Mammary epithelial cell (primary cell): ENCODE measurements at regions of chr12 and their contacts with region 1.

Region 1: DNA sequence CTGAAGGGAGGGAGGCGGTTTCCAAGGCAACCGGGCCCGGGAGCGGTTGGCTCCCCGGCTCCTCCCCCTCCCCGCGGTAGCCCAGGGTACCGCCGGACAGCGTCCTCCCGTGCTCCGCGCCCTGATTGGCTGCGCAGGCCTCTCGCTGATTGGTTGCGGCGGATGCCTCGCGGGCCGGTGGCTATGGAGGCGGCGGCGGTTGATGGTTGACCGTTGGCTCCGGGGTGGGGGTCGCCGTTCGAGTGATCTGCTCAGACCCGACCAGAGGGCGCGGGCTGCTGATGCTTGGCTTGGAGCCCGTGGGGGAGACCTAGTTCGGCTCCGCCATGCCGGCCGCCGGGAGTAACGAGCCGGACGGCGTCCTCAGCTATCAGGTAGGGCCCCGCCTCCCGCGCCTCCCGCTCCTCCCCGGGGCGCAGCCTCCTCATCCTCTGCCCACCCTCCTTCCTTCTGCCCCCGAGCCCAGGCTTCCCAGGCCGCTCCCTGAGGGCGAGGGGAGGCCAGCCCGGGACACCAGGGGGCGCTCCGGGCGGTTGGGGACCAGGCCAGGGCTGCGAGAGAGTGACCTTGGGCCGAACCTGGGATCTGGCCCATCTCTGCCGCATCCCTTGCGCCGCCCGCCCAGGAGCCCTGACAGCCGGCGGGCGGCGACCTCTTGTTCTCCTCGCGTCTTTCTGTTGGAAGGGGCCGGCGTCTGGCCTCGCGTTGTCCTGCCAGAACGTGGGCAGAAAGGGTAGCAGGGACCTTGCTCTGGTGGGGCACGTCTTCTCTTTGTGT is at the start of gene SLC4A8:
- DNase-seq: peak; percentile 52
- H3K4me3 ChIP-seq: peak within 1 kb of the TSS; percentile 47 to 56 (median 54)
- H3K27ac ChIP-seq: no peak within 1 kb of the TSS
- H3K4me1 ChIP-seq: peaks cover 5% of the 10 kb centered on the region
- H3K27me3 ChIP-seq: no peaks in the 10 kb centered on the region
- CTCF ChIP-seq: peak; percentile 55 to 82
- total RNA-seq, gene SLC4A8: 0.07 to 0.50 TPM

Region 2: DNA sequence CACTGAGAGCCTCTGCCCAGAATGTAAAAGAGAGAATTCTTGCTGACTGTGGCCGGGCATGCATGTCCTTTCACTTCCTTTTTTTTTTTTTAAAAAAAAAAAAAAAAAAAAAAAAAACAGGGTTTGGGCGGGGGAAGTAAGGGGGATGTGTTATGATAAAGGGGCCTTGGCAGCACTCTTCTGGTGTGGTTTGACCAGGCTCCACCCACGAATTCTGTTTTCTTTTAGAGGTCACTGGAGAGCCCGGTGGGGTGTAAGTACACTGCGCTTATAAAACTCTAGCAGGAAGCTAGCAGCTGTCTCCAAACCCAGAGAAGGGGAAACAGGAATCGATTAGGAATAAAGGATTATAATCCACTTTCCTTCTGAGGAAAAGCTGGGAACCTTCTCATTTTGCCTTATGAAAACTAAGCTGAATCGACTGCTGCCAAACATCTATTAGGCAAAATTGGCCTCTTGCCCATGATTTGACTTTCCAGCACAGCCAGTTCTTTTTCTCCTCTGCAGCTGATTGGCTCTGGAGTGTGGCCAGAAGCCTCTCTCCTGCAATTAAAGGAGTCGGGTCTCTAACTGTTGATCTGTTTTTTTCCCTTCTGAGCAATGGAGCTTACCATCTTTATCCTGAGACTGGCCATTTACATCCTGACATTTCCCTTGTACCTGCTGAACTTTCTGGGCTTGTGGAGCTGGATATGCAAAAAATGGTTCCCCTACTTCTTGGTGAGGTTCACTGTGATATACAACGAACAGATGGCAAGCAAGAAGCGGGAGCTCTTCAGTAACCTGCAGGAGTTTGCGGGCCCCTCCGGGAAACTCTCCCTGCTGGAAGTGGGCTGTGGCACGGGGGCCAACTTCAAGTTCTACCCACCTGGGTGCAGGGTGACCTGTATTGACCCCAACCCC is 500.2 kb before region 1 on chr12:
- CTCF ChIA-PET with region 1: no interaction called
- dilution Hi-C with region 1: no loop called
- in situ Hi-C with region 1: no loop called
- intact Hi-C with region 1: no loop called
- DNase-seq: peak; percentile 80
- H3K4me3 ChIP-seq: peak overlapping the region; percentile 39 to 63 (median 61)
- H3K27ac ChIP-seq: no peak overlapping the region
- H3K4me1 ChIP-seq: peaks cover 32% of the 10 kb centered on the region
- H3K27me3 ChIP-seq: no peaks in the 10 kb centered on the region
- CTCF ChIP-seq: no peak

Region 3: GRCh38 chr12:50953045-50953444 is 471.8 kb before region 1 on chr12:
- CTCF ChIA-PET with region 1: no interaction called
- dilution Hi-C with region 1: no loop called
- in situ Hi-C with region 1: no loop called
- intact Hi-C with region 1: no loop called
- DNase-seq: no peak
- H3K4me3 ChIP-seq: no peak overlapping the region
- H3K27ac ChIP-seq: no peak overlapping the region
- H3K4me1 ChIP-seq: no peaks in the 10 kb centered on the region
- H3K27me3 ChIP-seq: no peaks in the 10 kb centered on the region
- CTCF ChIP-seq: no peak

Region 4: DNA sequence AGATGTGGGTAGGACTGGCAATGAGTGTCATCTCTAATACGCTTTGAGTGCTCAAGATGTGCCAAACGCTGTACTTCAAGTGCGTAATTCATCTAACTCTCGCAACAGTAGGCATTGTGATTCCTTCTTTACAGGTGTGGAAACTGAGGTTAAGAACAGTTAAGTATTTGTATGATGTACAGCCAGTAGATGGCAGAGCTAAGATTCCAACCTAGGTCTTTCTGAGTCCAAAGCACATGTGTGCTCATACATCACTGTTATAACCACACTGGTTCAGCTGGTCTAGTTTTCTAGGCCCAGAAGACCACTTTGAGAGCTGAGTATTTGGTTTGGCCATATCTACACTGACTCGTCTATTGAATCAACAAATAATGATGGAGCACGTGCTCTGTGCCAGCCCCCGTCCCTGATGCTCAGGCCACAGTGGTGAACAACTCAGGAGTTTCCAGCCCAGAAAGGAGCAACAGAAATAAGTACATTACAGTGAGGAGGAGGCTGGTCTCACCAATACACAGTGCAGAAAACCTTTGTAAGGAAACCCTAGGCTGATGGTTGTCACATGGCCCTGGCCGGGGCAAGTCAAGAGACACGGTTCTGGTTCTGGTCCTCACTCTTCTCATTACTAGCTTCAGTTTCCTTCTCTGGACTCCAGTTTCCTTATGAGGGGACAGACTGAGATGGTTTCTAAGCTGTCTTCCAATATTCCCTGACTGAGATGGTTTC is 96.9 kb after region 1 on chr12:
- CTCF ChIA-PET with region 1: no interaction called
- dilution Hi-C with region 1: no loop called
- in situ Hi-C with region 1: loop called in 1 of 2 experiments (anchors 10 kb)
- intact Hi-C with region 1: no loop called
- DNase-seq: no peak
- H3K4me3 ChIP-seq: no peak overlapping the region
- H3K27ac ChIP-seq: no peak overlapping the region
- H3K4me1 ChIP-seq: no peaks in the 10 kb centered on the region
- H3K27me3 ChIP-seq: no peaks in the 10 kb centered on the region
- CTCF ChIP-seq: peak in 1 of 2 donors; percentile 32

Region 5: DNA sequence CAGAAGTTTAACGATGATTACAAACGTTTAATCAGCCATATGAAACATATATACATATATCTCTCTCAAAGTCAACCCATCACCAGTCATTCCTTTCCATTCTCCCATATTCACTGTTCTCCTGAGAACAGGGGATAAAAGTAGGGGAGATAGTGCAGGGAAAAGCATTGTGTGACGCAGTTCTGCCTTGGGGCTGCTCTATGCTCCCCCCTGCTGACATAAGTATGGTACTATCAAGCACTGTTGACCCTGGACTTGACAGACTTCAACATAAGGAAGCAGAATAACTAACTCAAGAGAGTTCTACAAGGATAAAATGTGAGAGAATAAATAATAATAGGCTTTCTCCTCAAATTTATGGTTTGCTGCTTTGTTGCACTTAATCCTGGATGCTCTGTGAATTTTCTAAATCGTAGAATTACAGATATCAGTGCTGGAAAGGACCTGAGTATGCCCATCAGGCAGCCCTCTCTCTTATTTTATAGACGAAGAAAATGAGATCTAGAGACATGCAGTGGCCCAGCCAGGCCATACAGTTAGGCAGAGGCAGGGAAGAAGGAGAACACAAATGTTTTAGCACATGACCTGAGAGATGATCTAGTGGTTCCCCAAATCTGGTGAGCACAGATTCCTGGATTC is 253.4 kb after region 1 on chr12:
- CTCF ChIA-PET with region 1: no interaction called
- dilution Hi-C with region 1: no loop called
- in situ Hi-C with region 1: no loop called
- intact Hi-C with region 1: loop called (anchors 1 kb)
- DNase-seq: peak; percentile 31
- H3K4me3 ChIP-seq: no peak overlapping the region
- H3K27ac ChIP-seq: no peak overlapping the region
- H3K4me1 ChIP-seq: peaks cover 1% of the 10 kb centered on the region
- H3K27me3 ChIP-seq: no peaks in the 10 kb centered on the region
- CTCF ChIP-seq: peak; percentile 90 to 93

Region 6: GRCh38 chr12:51823875-51824565 is 399.2 kb after region 1 on chr12:
- CTCF ChIA-PET with region 1: interaction called, 5 read pairs
- dilution Hi-C with region 1: no loop called
- in situ Hi-C with region 1: loop called (anchors 5 to 10 kb)
- intact Hi-C with region 1: loop called (anchors 1 kb)
- DNase-seq: peak; percentile 57
- H3K4me3 ChIP-seq: no peak overlapping the region
- H3K27ac ChIP-seq: no peak overlapping the region
- H3K4me1 ChIP-seq: peaks cover 30% of the 10 kb centered on the region
- H3K27me3 ChIP-seq: peaks cover 5% of the 10 kb centered on the region
- CTCF ChIP-seq: peak; percentile 39 to 76

Region 7: DNA sequence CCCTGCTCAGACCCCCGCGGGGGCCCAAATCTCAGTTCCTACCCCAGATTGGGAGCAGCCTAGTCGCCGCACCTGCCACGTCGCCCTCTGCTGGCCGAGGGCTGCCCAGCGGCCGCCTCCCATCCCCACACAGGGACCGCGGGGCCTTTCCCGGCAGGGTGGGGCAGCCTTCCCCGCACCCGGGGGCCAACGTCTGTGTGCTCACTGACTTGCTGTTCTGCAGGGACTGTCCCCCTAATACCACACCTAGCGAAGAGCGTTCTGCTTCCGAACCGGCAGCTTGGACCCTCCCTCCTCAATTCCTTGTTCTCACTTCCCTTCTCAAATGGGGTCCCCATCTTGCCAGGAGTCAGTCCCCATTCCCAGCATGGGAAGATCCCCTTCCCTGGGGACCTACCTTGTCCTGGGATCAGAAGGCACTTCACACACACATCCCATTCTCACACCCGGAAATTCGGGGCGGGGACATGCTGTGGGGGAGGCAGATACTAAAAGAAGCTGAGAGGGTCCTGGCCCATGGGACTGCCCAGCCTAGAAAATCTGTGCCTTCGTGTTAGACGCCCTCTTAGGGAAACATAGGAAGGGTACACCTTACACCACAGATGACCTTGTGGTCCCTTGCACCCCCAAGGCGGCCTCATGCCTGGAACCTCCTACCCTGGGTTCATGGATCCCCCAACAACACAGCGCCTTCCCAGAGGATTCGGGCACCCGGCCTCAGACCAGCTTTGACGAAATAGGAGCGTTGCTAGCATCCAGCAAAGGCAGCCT is 498.8 kb after region 1 on chr12:
- CTCF ChIA-PET with region 1: no interaction called
- dilution Hi-C with region 1: no loop called
- in situ Hi-C with region 1: no loop called
- intact Hi-C with region 1: loop called (anchors 1 kb)
- DNase-seq: no peak
- H3K4me3 ChIP-seq: no peak overlapping the region
- H3K27ac ChIP-seq: no peak overlapping the region
- H3K4me1 ChIP-seq: no peaks in the 10 kb centered on the region
- H3K27me3 ChIP-seq: no peaks in the 10 kb centered on the region
- CTCF ChIP-seq: peak; percentile 73 to 91